ENCODE measurements at regions of chr6 and their contacts with region 1.

Region 1: GRCh38 chr6:157873735-157874344 is 50.8 kb downstream of the SNX9 start:
- DNase-seq: peak; percentile 30

Region 2: GRCh38 chr6:157764178-157765033 is 109.4 kb before region 1 on chr6:
- in situ Hi-C with region 1: loop called (anchors 25 kb)
- DNase-seq: peak; percentile 98

Measured in Caki2 (cell line).